ENCODE measurements at regions of chr22 and their contacts with region 1.

Region 1: GRCh38 chr22:36856121-36856791 is 4.5 kb upstream of the NCF4 start:
- DNase-seq: peak; percentile 94 to 96
- H3K4me3 ChIP-seq: no peak overlapping the region
- H3K27ac ChIP-seq: no peak overlapping the region
- H3K4me1 ChIP-seq: peaks cover 0 to 16% (median 8%) of the 10 kb centered on the region in 4 donors
- H3K27me3 ChIP-seq: peaks cover 0 to 22% (median 0%) of the 10 kb centered on the region in 3 donors
- CTCF ChIP-seq: peak in 5 of 7 experiments; percentile 99 to 100 (median 99)
- EP300 ChIP-seq: no peak
- POLR2A ChIP-seq: no peak

Region 2: DNA sequence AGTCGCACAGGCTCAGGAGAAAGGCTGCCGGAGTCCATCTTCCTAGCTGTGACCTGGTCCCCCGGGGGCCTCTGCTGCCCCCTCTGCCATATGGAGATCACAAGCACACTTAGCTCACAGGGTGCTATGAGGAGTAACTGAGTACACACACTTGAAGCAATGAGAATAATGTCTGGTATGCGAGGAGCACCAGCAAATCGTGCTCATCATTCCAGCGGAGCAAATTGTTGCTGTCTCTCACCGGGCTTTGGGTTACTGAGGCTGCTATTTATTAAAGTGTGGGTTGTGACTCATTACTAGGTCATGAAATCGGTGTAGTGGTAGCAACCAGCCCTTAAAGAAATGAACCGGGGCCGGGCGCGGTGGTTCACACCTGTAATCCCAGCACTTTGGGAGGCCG is 279.2 kb before region 1 on chr22:
- intact Hi-C with region 1: no loop called
- DNase-seq: no peak
- H3K4me3 ChIP-seq: no peak overlapping the region
- H3K27ac ChIP-seq: no peak overlapping the region
- H3K4me1 ChIP-seq: no peaks in the 10 kb centered on the region
- H3K27me3 ChIP-seq: peaks cover 0 to 51% (median 0%) of the 10 kb centered on the region in 3 donors
- CTCF ChIP-seq: no peak
- EP300 ChIP-seq: no peak
- POLR2A ChIP-seq: no peak

Region 3: GRCh38 chr22:36757668-36758211 is 98.5 kb before region 1 on chr22:
- intact Hi-C with region 1: no loop called
- DNase-seq: peak; percentile 83 to 88
- H3K4me3 ChIP-seq: no peak overlapping the region
- H3K27ac ChIP-seq: no peak overlapping the region
- H3K4me1 ChIP-seq: peaks cover 0 to 17% (median 3%) of the 10 kb centered on the region in 4 donors
- H3K27me3 ChIP-seq: peaks cover 6 to 40% (median 20%) of the 10 kb centered on the region in 3 donors
- CTCF ChIP-seq: peak in 5 of 7 experiments; percentile 53 to 78 (median 74)
- EP300 ChIP-seq: no peak
- POLR2A ChIP-seq: no peak

Region 4: GRCh38 chr22:36781656-36782627 is 74.3 kb before region 1 on chr22:
- intact Hi-C with region 1: loop called (anchors 5 kb)
- DNase-seq: peak; percentile 82 to 91
- H3K4me3 ChIP-seq: no peak overlapping the region
- H3K27ac ChIP-seq: peak overlapping the region in 1 of 5 donors; percentile 62
- H3K4me1 ChIP-seq: peaks cover 5 to 12% (median 11%) of the 10 kb centered on the region in 4 donors
- H3K27me3 ChIP-seq: peaks cover 0 to 8% (median 0%) of the 10 kb centered on the region in 3 donors
- CTCF ChIP-seq: peak in 5 of 7 experiments; percentile 70 to 91 (median 87)
- EP300 ChIP-seq: no peak
- POLR2A ChIP-seq: no peak

Region 5: GRCh38 chr22:36977947-36978660 is 121.8 kb after region 1 on chr22:
- intact Hi-C with region 1: loop called (anchors 10 kb)
- DNase-seq: peak; percentile 92 to 96
- H3K4me3 ChIP-seq: peak overlapping the region; percentile 36 to 42 (median 41)
- H3K27ac ChIP-seq: peak overlapping the region in 4 of 5 donors; percentile 14 to 69 (median 62)
- H3K4me1 ChIP-seq: peaks cover 5 to 12% (median 10%) of the 10 kb centered on the region in 4 donors
- H3K27me3 ChIP-seq: peaks cover 0 to 13% (median 0%) of the 10 kb centered on the region in 3 donors
- CTCF ChIP-seq: peak in 5 of 7 experiments; percentile 90 to 95 (median 94)
- EP300 ChIP-seq: no peak
- POLR2A ChIP-seq: no peak

Region 6: DNA sequence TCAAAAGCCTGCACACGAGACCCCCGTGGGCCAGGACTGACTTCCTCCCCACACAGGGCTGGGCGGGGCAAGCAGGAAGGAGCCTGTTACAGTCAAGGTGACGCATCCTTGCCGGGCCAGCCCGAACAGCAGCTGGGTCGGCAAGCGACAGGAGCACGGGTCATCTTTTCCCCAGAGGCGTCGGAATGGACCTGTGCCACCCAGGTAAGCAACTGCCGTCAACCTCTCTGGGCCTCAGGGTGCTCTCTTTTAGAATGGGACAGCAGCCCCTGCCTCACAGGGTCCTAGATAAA is 426.1 kb after region 1 on chr22 and contains the start of gene CYTH4:
- intact Hi-C with region 1: no loop called
- DNase-seq: peak; percentile 70 to 74
- H3K4me3 ChIP-seq: peak within 1 kb of the TSS; percentile 25 to 47 (median 47)
- H3K27ac ChIP-seq: peak within 1 kb of the TSS; percentile 23 to 85 (median 73)
- H3K4me1 ChIP-seq: peaks cover 0 to 15% (median 2%) of the 10 kb centered on the region in 4 donors
- H3K27me3 ChIP-seq: peaks cover 0 to 92% (median 22%) of the 10 kb centered on the region in 3 donors
- CTCF ChIP-seq: no peak
- EP300 ChIP-seq: no peak
- POLR2A ChIP-seq: no peak
- total RNA-seq, gene CYTH4: 4.2 to 77.0 (median 12.5) TPM in 4 of 5 donors, not detected in the other